Activated CD4-positive, alpha-beta memory T cell treated with anti-CD3 and anti-CD28 coated beads, Interleukin-2, amount 10 ng/mL, durations not matched to agents 7 days and 5 days (primary cell): ENCODE measurements at regions of chr10 and their contacts with region 1.

Region 1: DNA sequence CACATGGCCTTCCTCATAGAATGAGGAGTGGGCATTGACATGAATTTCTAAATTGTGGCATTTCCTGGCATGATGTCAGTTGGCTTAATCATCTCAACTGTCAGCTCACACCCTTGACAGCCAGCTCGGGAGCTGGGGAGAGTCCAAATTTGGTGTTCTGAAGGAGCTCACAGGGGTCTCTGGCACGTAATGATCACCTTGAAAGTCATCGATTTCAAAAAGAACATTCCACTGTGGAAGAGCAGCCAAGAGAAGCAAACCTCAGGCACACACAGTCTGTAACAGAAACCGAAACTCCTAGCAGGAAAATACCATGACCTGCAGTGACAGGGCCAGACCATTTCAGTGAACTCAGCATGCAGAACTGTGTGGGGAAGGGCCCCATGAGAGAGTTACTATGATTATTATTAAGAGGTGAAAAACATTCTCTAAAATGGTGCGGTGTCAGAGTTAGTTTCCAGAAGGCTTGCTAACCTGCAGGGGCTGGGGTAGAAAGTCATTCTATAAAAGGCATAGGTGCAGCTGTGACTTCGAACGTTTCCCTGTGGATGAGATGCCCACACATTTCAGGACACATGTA is 26.4 kb upstream of the KLF6 start:
- DNase-seq: peak; percentile 71
- H3K4me3 Mint-ChIP-seq: peak overlapping the region; percentile 68
- H3K27ac Mint-ChIP-seq: no peak overlapping the region
- H3K4me1 Mint-ChIP-seq: peaks cover 84% of the 10 kb centered on the region
- H3K27me3 Mint-ChIP-seq: no peaks in the 10 kb centered on the region

Region 2: DNA sequence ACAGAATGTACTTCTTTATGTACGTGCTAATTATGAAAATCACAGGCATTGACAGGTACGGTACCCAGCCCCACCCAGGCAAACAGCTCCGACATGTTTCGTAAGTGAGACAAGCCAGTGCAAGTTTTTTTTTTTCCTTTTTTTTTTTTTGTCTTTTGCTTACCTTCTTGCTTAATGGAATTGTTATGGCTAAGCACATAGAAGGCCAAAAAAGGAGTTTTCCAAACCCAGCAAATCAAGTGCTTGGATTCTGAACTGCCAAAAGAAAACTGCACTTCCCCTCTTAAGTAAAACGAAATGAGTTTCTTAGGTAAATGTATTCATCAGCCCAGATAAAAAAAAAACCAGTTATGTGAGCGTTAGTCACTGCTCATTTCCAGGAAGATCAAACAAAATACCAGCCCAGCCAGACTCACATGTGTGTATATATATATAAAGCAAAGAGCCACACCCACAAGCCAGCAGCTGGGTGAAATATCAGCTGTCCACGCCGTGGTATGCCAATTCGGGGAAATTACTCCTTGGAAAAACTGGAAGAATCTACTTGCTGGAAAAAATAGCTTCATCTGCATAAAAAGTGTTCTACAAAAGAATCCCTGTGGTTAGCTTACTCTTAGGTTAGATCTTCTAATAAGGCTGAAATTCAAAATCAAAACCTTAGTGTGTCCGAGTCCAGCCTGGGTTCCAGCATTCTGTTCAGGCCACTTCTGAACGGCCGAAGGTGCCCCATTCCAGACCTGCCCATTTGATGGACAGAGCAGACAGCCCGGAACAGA is 34.4 kb before region 1 on chr10:
- CTCF ChIA-PET with region 1: interaction called, 25 read pairs
- POLR2A ChIA-PET with region 1: interaction called, 1,053 read pairs
- DNase-seq: peak; percentile 64
- H3K4me3 Mint-ChIP-seq: peak overlapping the region; percentile 47
- H3K27ac Mint-ChIP-seq: peak overlapping the region; percentile 58
- H3K4me1 Mint-ChIP-seq: peaks cover 69% of the 10 kb centered on the region
- H3K27me3 Mint-ChIP-seq: no peaks in the 10 kb centered on the region

Region 3: GRCh38 chr10:3835770-3836169 is 24.4 kb after region 1 on chr10:
- CTCF ChIA-PET with region 1: no interaction called
- POLR2A ChIA-PET with region 1: interaction called, 144 read pairs
- DNase-seq: no peak
- H3K4me3 Mint-ChIP-seq: no peak overlapping the region
- H3K27ac Mint-ChIP-seq: no peak overlapping the region
- H3K4me1 Mint-ChIP-seq: peaks cover 42% of the 10 kb centered on the region
- H3K27me3 Mint-ChIP-seq: no peaks in the 10 kb centered on the region

Region 4: GRCh38 chr10:3866332-3866731 is 55.0 kb after region 1 on chr10:
- CTCF ChIA-PET with region 1: no interaction called
- POLR2A ChIA-PET with region 1: interaction called, 16 read pairs
- DNase-seq: no peak
- H3K4me3 Mint-ChIP-seq: no peak overlapping the region
- H3K27ac Mint-ChIP-seq: peak overlapping the region; percentile 49
- H3K4me1 Mint-ChIP-seq: peaks cover 46% of the 10 kb centered on the region
- H3K27me3 Mint-ChIP-seq: no peaks in the 10 kb centered on the region

Region 5: DNA sequence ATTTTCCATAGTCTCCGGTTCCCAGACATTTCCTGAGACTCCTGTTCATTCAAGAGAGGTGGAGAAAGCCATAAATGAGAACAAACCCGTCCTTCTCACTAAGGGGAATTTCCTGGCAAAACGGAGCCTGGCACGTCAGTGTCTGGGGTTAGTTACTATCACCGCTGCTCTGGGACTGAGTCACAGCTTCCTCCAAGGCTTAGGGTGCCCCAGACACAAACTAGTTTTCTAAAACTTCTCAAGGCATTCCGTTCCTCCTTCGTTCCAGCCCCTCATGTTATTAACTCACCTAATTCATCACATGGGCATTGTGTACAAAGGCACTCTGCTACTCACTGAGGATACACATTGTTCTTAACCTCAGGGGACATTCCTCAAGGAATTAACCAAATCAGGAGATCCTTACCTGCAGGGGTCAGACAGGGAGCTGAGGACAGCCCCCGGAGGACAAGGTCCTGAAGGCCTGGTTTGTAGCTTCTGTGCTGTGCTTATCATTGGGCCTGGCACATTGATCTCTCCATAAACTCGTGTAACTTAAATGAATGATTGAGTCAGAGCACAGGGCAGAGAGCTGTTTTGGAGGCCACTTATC is 76.6 kb after region 1 on chr10:
- CTCF ChIA-PET with region 1: interaction called, 4 read pairs
- POLR2A ChIA-PET with region 1: interaction called, 22 read pairs
- DNase-seq: peak; percentile 72
- H3K4me3 Mint-ChIP-seq: peak overlapping the region; percentile 36
- H3K27ac Mint-ChIP-seq: peak overlapping the region; percentile 84
- H3K4me1 Mint-ChIP-seq: peaks cover 57% of the 10 kb centered on the region
- H3K27me3 Mint-ChIP-seq: no peaks in the 10 kb centered on the region

Region 6: DNA sequence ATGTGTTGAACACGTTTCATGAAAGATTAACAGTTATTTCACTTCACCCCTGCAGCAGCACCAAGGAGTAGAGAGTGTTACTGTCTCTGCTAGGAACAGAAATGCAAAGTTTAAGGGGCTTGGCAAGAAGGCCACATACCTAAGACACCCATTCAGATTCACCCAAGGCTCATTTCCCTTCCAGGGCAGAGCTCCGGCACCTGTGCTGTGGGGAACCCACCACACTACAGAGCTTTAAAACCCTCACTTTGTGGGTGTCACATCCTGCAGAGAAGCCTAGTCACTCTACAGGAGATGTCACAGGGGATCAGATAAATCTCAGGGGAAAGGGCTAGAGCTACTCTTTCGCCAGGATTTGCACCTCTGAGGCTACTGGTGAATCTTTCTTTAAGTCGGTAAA is 149.7 kb after region 1 on chr10:
- CTCF ChIA-PET with region 1: no interaction called
- POLR2A ChIA-PET with region 1: interaction called, 14 read pairs
- DNase-seq: peak; percentile 76
- H3K4me3 Mint-ChIP-seq: peak overlapping the region; percentile 18
- H3K27ac Mint-ChIP-seq: peak overlapping the region; percentile 80
- H3K4me1 Mint-ChIP-seq: peaks cover 49% of the 10 kb centered on the region
- H3K27me3 Mint-ChIP-seq: no peaks in the 10 kb centered on the region

Region 7: DNA sequence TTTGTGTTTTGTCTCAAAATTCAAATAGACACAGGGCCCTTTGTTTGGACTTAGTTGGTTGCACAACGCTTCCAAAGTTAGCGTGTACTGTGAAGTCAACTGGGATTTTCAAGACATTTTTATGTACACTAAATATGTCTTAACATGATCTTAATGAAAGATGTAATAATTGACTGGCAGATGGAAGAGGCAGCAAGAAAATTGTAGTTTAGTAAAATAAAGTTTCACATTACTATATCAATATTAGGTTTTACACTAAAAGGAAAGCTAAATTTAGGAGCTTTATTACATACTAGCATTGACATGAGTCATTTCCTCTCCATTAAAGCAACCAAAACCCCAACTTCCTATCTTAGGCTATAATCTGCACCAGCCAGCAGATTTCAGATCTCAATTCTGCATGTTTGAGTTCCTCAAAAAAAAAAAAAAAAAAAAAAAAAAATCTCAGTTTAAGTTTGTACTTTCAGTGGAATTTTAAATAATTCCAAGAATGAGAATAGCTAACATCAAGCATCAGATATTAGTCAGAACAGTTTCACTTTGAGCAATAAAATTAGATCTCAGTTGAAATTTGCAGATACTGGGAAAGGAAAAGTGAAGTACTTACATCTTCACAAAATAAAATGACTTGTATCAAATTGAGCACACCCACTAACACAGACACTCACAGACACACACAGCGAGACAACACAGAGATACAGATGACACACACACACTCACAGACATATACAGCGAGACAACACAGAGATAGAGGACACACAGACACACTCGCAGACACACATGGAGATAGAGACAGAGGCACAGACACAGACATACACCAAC is 320.2 kb after region 1 on chr10:
- CTCF ChIA-PET with region 1: interaction called, 3 read pairs
- POLR2A ChIA-PET with region 1: interaction called, 23 read pairs
- DNase-seq: peak; percentile 63
- H3K4me3 Mint-ChIP-seq: no peak overlapping the region
- H3K27ac Mint-ChIP-seq: no peak overlapping the region
- H3K4me1 Mint-ChIP-seq: peaks cover 41% of the 10 kb centered on the region
- H3K27me3 Mint-ChIP-seq: no peaks in the 10 kb centered on the region